Psoas muscle (tissue), 8 donors: ENCODE measurements at regions of chr9 and their contacts with region 1.

Region 1: DNA sequence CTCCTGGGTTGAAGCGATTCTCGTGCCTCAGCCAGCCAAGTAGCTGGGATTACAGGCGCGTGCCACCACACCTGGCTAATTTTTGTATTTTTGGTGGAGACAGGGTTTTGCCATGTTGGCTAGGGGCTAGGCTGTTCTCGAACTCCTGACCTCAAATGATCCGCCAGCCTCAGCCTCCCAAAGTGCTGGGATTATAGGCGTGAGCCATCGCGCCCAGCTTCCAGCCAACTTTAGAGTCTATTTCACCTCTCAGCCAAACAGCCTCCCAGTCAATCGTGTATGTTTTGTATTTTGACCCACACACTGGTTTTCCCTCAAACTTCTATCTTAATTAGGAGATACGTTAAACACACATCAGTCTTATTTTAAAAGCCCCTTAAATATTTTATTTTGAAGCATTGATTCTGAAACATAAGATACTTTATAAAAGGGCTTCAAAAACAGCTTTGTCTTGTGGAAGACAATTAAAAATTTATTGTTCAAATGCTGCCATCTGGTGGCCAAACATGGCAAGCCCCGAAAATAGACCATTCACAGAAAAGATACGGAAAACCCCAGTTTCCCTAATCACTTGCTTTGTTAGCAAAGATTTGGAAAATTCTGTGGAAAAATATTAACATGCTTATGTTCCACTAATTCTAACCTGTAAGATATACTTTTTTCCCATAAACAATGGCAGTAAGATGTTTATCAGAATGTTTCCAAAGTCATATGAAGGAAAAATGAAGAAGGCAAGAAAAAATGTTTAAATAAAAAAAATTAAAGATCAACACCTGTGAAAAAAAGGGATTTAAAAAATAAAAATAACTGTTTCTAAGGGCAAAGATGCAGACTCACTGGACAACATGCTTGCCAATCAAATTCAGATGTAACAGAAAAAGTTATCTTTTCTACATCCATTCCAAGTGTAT is 33.1 kb downstream of the APTX start:
- DNase-seq: peak; percentile 29 to 60
- ATAC-seq: peak in 2 of 4 donors; percentile 42 to 73
- H3K4me3 ChIP-seq: no peak overlapping the region
- H3K27ac ChIP-seq: no peak overlapping the region
- H3K4me1 ChIP-seq: no peaks in the 10 kb centered on the region
- H3K27me3 ChIP-seq: no peaks in the 10 kb centered on the region
- CTCF ChIP-seq: peak; percentile 88

Region 2: DNA sequence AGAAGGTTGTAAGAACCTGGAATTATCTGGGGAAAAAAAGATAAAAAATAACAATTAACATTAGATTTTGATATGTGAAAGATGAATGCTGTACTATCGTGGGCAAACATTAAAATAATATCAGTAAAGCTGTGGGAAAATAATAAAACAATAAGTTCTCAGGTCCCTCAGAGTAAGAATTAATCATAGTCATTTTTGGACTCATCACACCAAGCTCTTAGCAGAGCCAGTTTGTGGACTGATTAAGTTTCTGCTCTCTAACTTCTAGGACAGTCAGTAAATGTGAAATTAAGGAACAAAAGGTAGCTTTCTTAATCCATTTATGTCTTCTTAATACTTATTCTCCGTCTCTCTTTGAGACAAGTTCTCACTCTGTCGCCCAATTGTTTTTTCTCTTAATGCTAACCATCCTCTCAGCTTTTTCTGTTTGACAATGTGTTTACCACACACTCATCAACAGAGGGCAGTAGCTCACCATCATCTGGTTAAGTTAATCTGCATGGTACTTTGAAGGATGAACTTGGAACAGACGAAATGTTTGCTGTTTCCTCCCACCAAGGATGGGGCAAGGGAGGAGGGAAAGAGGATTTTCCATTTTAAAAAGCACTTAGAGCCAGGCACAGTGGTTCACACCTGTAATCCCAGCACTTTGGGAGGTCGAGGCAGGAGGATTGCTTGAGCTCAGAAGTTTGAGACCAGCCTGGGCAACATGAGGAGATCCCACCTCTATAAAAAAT is 589.2 kb before region 1 on chr9:
- intact Hi-C with region 1: loop called (anchors 5 kb)
- DNase-seq: no peak
- ATAC-seq: peak; percentile 78 to 93 (median 88)
- H3K4me3 ChIP-seq: no peak overlapping the region
- H3K27ac ChIP-seq: no peak overlapping the region
- H3K4me1 ChIP-seq: no peaks in the 10 kb centered on the region
- H3K27me3 ChIP-seq: no peaks in the 10 kb centered on the region
- CTCF ChIP-seq: peak; percentile 77

Region 3: GRCh38 chr9:32384364-32385151 is 583.8 kb before region 1 on chr9 and contains the start of gene ACO1:
- intact Hi-C with region 1: loop called (anchors 5 kb)
- DNase-seq: peak; percentile 92 to 95
- ATAC-seq: peak; percentile 98 to 99 (median 98)
- H3K4me3 ChIP-seq: peak within 1 kb of the TSS; percentile 73
- H3K27ac ChIP-seq: peak within 1 kb of the TSS; percentile 83
- H3K4me1 ChIP-seq: peaks cover 12% of the 10 kb centered on the region
- H3K27me3 ChIP-seq: no peaks in the 10 kb centered on the region
- CTCF ChIP-seq: no peak
- total RNA-seq, gene ACO1: 27.2 to 39.4 (median 32.3) TPM

Region 4: GRCh38 chr9:32579706-32580331 is 388.5 kb before region 1 on chr9:
- intact Hi-C with region 1: loop called (anchors 2 kb)
- DNase-seq: peak; percentile 59 to 76
- ATAC-seq: peak in 2 of 4 donors; percentile 53 to 75
- H3K4me3 ChIP-seq: no peak overlapping the region
- H3K27ac ChIP-seq: no peak overlapping the region
- H3K4me1 ChIP-seq: no peaks in the 10 kb centered on the region
- H3K27me3 ChIP-seq: no peaks in the 10 kb centered on the region
- CTCF ChIP-seq: peak; percentile 91

Region 5: DNA sequence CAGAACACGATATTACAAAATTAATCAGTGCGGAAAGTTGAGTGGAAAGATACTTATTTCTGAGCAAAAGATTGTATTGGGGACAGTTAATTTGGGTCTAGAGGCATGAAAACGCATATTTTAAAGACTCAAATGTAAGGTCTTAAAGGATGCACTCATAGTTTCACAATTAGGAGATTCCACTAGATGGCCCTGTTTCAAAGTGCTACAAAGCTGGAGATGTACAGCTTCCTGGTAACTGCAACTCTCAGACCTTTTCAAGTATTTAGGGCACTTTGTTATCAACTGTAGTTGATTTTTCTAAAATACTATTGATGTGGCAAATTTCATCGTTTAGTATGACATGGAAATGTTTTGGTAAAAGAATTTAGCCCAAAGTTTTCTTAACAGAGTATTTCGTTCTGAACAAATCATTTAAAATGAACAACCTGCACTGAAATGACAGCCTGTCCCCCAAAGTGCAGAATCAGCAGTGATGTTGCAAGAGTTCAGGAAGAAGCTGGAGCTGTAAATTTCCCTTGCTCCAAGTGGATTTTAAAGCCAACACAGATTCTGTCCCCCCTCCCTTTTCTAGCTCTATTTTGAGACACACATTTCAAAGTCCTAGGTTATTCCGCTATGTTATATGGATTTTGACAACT is 379.2 kb before region 1 on chr9:
- intact Hi-C with region 1: loop called in 1 of 2 experiments (anchors 2 kb)
- DNase-seq: no peak
- ATAC-seq: no peak
- H3K4me3 ChIP-seq: no peak overlapping the region
- H3K27ac ChIP-seq: no peak overlapping the region
- H3K4me1 ChIP-seq: no peaks in the 10 kb centered on the region
- H3K27me3 ChIP-seq: peaks cover 0 to 5% (median 0%) of the 10 kb centered on the region in 3 donors
- CTCF ChIP-seq: peak; percentile 32

Region 6: DNA sequence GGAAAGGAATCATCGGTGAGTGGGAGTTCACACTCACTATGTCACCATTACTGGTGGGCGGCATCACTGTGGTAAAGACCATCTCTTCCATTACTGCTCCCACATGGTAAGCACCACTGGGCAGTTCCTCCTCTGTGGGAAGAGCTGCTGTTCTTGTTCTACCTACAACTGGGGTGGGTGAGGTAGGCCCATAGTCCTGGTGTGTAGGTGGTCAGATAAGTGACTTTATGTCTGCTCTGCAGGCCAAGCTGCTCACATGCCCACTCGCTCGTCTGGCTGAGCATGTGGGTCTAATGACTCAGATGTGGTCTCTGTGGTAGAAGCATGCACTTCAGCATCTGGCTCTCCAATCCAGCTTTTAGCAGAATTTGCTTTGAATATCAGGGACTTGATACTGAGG is 102.1 kb before region 1 on chr9:
- intact Hi-C with region 1: loop called (anchors 2 to 10 kb)
- DNase-seq: no peak
- ATAC-seq: no peak
- H3K4me3 ChIP-seq: no peak overlapping the region
- H3K27ac ChIP-seq: no peak overlapping the region
- H3K4me1 ChIP-seq: peaks cover 10% of the 10 kb centered on the region
- H3K27me3 ChIP-seq: no peaks in the 10 kb centered on the region
- CTCF ChIP-seq: no peak

Region 7: GRCh38 chr9:32877639-32878217 is 90.6 kb before region 1 on chr9:
- intact Hi-C with region 1: loop called in 1 of 2 experiments (anchors 10 kb)
- DNase-seq: no peak
- ATAC-seq: peak in 3 of 4 donors; percentile 31 to 61 (median 48)
- H3K4me3 ChIP-seq: no peak overlapping the region
- H3K27ac ChIP-seq: peak overlapping the region; percentile 58
- H3K4me1 ChIP-seq: peaks cover 20% of the 10 kb centered on the region
- H3K27me3 ChIP-seq: no peaks in the 10 kb centered on the region
- CTCF ChIP-seq: no peak